Panc1 (cell line): ENCODE measurements at regions of chr7 and their contacts with region 1.

Region 1: DNA sequence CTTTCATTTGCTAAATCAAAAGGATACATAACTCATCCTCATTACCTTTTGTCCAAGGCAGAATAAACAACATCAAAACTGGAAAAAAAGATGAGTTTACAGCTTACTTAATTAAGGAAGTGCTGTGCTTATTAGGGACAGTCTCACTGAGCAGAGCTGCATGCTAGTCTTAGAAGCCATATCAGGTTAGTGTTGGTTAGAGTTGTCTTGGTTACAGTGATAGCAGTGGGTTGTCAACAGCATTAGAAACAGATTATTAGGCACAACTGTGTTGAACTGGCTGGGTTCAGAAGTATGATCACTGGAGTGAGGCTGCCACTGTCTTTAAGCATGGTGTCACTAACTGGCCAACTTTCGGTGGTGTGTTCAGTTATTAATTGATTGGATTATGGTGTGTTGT is 503.9 kb upstream of the IGFBP3 start:
- DNase-seq: no peak
- ATAC-seq: no peak
- H3K4me3 ChIP-seq: no peak overlapping the region
- H3K27ac ChIP-seq: no peak overlapping the region
- H3K4me1 ChIP-seq: no peaks in the 10 kb centered on the region
- H3K27me3 ChIP-seq: no peaks in the 10 kb centered on the region
- CTCF ChIP-seq: no peak

Region 2: DNA sequence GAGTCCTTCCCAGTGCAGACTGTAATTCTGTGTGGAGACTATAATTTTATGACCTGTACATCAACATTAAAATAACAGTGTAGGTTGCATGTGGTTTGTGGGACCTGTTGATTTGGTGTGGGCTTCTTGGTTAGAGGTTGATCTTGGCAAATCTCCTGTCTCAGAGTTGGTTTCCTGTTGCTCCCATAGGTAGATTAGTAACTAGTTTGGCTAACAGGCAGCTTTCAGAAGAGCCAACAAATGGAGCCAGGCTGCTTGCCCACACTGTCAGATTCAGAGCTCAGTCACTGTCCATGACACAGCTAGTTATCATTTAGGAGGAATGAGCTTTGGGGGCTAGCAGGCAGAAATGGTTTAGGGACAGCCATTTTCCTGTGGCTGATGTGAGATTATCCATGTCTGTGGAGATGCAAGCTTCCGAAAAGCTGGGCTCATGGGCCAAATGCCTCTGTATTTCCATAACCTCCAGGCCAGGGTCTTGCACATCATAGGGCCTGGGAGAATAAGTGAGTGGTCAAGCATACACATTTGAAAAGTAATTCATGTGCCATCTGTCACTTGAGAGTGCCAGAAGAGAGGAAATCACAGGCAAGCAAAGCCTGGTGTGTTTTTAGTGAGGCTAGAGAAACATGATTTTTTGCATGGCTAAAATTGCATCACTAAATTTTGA is 1391.5 kb before region 1 on chr7:
- CTCF ChIA-PET with region 1: no interaction called
- POLR2A ChIA-PET with region 1: no interaction called
- in situ Hi-C with region 1: no loop called
- intact Hi-C with region 1: loop called (anchors 10 kb)
- DNase-seq: no peak
- ATAC-seq: no peak
- H3K4me3 ChIP-seq: no peak overlapping the region
- H3K27ac ChIP-seq: no peak overlapping the region
- H3K4me1 ChIP-seq: no peaks in the 10 kb centered on the region
- H3K27me3 ChIP-seq: no peaks in the 10 kb centered on the region
- CTCF ChIP-seq: no peak

Region 3: DNA sequence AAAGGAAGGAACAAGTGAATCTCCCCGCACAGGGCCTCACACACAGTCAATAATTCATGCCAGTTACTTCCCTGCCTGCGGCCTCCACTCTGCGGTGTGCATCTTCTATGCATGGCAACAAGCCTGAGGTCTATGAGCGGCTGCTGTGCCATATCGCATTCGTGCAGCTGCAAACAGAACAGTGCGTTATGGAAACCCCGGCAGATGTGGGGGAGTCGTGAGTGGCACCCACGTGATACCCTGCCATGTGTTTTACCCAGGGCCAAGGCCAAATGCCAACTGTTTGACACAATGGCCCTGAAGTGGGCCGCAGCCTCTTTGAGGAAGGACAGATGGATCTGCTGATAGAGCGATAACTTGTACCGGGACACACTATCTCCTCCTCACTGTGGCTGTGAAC is 1143.6 kb after region 1 on chr7:
- CTCF ChIA-PET with region 1: no interaction called
- POLR2A ChIA-PET with region 1: no interaction called
- in situ Hi-C with region 1: no loop called
- intact Hi-C with region 1: no loop called
- DNase-seq: no peak
- ATAC-seq: no peak
- H3K4me3 ChIP-seq: no peak overlapping the region
- H3K27ac ChIP-seq: peak overlapping the region; percentile 100
- H3K4me1 ChIP-seq: peaks cover 91% of the 10 kb centered on the region
- H3K27me3 ChIP-seq: no peaks in the 10 kb centered on the region
- CTCF ChIP-seq: no peak